ENCODE measurements at regions of chr17 and their contacts with region 1.

Region 1: DNA sequence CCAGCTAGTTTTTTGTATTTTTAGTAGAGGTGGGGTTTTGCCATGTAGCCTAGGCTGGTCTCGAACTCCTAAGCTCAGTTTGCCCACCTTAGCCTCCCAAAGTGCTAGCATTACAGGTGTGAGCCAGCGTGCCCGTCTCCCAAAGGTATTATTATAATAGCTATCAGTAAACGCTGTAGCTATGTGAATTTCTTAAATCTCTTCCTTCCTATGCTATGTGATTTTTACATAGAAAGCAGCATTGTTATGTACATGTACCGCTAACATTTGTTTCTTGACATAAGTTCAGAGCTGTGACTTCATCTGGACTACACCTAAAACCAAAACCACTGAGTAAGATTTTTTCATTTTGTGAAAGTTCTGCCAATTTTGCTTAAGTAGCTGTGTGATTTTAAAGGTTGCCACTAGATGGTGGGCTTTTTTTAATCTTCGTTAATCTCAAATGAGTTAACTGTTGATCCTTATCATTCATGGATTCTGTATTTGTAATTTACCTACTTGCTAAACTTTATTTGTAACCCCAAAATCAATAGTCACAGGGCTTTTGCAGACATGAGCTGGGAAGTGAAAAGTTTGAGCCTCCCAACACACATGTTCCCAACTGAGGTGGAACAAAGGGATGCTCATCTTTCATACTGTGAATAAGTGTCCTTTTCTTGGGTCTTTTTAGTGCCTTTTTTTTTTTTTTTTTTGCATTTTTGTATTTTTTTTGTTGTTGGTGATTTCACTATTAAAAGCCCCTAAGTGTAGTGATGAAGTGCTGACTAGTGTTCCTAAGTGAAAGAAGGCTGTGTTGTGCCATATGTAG is 21.9 kb downstream of the PRKAR1A start:
- DNase-seq: no peak
- H3K4me3 Mint-ChIP-seq: no peak overlapping the region
- H3K27ac Mint-ChIP-seq: no peak overlapping the region
- H3K4me1 Mint-ChIP-seq: peaks cover 15% of the 10 kb centered on the region
- H3K27me3 Mint-ChIP-seq: no peaks in the 10 kb centered on the region

Region 2: DNA sequence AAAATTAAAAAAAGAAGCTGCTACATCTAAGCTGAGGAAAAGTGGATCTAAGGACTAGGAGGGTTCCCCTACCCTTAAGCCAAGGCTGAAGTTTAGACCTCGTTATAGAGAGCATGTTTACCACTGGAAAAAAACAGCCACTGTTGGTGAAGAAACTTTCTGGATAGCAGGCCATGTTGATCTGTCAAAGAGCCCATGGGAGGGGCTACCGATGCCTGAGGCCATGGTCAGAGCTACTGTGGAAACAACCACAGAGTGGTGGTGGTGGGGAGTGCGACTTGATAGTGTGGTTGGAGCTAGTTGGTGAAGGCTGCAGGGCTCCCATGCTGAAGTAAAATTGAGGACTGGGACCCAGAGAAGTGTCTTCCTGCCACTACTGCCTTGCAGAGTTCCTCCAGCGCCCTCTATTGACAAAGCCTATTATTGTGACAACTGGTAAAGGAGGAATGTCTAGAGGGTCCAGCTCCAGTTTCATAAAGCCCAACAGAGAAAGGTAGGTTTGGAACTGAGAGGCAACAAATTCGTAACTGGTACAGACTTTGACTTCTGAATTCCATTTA is 79.7 kb after region 1 on chr17:
- intact Hi-C with region 1: loop called (anchors 5 kb)
- DNase-seq: peak; percentile 30
- H3K4me3 Mint-ChIP-seq: no peak overlapping the region
- H3K27ac Mint-ChIP-seq: no peak overlapping the region
- H3K4me1 Mint-ChIP-seq: no peaks in the 10 kb centered on the region
- H3K27me3 Mint-ChIP-seq: peaks cover 29% of the 10 kb centered on the region

Region 3: DNA sequence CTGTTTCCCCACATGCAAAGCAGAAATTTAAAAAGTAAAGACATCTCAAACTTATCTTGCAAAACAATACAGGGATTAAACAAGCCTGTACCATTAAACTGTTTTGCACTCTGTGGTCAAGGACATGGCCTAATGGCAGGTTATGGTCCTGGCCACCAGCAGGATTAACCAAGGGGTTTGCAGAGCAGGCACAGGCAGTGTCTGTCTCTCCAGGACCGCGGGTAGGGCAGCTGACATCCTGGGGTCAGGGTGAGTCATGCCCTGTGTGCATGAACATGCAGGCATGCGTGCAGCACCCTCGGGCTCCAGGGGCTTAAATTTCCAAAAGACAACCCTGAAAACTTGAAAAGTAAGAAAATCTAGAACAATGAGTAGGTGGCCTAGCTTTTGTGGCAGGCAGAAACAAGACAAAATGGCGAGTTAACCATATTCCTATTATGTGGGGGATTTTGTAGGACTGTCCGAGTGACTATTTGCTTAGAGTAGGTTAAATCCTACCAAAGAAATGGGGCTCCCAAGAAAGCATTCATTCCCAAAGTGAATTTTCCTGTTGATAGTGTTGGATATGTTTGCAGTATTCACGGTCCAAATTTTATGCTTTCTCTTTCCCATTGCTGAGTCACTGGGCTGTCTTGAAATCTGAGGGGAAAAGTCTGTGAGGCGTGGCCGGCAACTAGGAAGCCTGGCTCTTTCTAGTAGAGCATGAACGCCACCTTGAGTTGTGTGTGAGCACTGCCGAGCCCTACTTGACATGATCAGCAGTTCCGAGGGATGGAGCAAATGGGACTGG is 225.4 kb after region 1 on chr17:
- intact Hi-C with region 1: loop called (anchors 1 kb)
- DNase-seq: peak; percentile 35
- H3K4me3 Mint-ChIP-seq: peak overlapping the region; percentile 5
- H3K27ac Mint-ChIP-seq: no peak overlapping the region
- H3K4me1 Mint-ChIP-seq: peaks cover 21% of the 10 kb centered on the region
- H3K27me3 Mint-ChIP-seq: peaks cover 9% of the 10 kb centered on the region

Region 4: GRCh38 chr17:68777243-68777855 is 243.3 kb after region 1 on chr17:
- intact Hi-C with region 1: no loop called
- DNase-seq: no peak
- H3K4me3 Mint-ChIP-seq: no peak overlapping the region
- H3K27ac Mint-ChIP-seq: no peak overlapping the region
- H3K4me1 Mint-ChIP-seq: peaks cover 7% of the 10 kb centered on the region
- H3K27me3 Mint-ChIP-seq: peaks cover 11% of the 10 kb centered on the region

Measured in activated T-helper 1 cell treated with anti-CD3 and anti-CD28 coated beads, Interleukin-12 subunit alpha, Interleukin-12 subunit beta, Interleukin-2, Interleukin-4 antibody, amounts not matched to agents 30 ng/mL and 10 ng/mL and 1 ng/mL, durations not matched to agents 14 hours and 24 hours and 36 hours (primary cell).